ENCODE measurements at regions of chr12 and their contacts with region 1.

Region 1: GRCh38 chr12:119804011-119804641 is 73.0 kb downstream of the CIT start:
- DNase-seq: no peak
- ATAC-seq: no peak
- H3K4me3 ChIP-seq: no peak overlapping the region
- H3K4me3 Mint-ChIP-seq: no peak overlapping the region
- H3K27ac ChIP-seq: no peak overlapping the region
- H3K27ac Mint-ChIP-seq: no peak overlapping the region
- H3K4me1 ChIP-seq: no peaks in the 10 kb centered on the region
- H3K4me1 Mint-ChIP-seq: peaks cover 0 to 6% (median 3%) of the 10 kb centered on the region in 3 donors
- H3K27me3 ChIP-seq: peaks cover 0 to 3% of the 10 kb centered on the region in 2 experiments
- H3K27me3 Mint-ChIP-seq: no peaks in the 10 kb centered on the region

Region 2: GRCh38 chr12:119715268-119715620 is 88.9 kb before region 1 on chr12:
- CTCF ChIA-PET with region 1: interaction called in 1 of 2 experiments, 10 read pairs
- POLR2A ChIA-PET with region 1: no interaction called
- DNase-seq: no peak
- ATAC-seq: no peak
- H3K4me3 ChIP-seq: no peak overlapping the region
- H3K4me3 Mint-ChIP-seq: no peak overlapping the region
- H3K27ac ChIP-seq: no peak overlapping the region
- H3K27ac Mint-ChIP-seq: no peak overlapping the region
- H3K4me1 ChIP-seq: no peaks in the 10 kb centered on the region
- H3K4me1 Mint-ChIP-seq: no peaks in the 10 kb centered on the region
- H3K27me3 ChIP-seq: no peaks in the 10 kb centered on the region
- H3K27me3 Mint-ChIP-seq: no peaks in the 10 kb centered on the region

Region 3: DNA sequence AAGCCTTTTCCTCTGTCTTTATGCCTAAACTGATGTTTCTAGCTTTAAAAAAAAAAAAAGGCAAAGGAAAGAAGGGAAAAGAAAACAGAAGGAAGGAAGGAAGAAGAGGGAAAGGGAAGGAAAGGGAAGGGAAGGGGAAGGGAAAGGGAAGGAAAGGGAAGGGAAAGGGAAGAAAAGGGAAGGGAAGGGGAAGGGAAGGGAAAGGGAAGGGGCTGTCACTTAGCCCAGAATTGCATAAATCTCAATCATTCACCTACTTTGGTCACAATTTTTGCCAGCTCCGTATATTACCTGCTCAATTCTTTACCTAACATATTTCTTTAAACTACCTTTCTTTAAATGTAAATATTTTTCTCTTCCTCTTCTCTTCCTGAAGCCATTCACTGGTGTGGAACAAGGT is 46.2 kb after region 1 on chr12:
- CTCF ChIA-PET with region 1: no interaction called
- POLR2A ChIA-PET with region 1: no interaction called
- DNase-seq: no peak
- ATAC-seq: no peak
- H3K4me3 ChIP-seq: no peak overlapping the region
- H3K4me3 Mint-ChIP-seq: no peak overlapping the region
- H3K27ac ChIP-seq: no peak overlapping the region
- H3K27ac Mint-ChIP-seq: no peak overlapping the region
- H3K4me1 ChIP-seq: no peaks in the 10 kb centered on the region
- H3K4me1 Mint-ChIP-seq: no peaks in the 10 kb centered on the region
- H3K27me3 ChIP-seq: no peaks in the 10 kb centered on the region
- H3K27me3 Mint-ChIP-seq: no peaks in the 10 kb centered on the region